GM12878 (cell line): ENCODE measurements at regions of chr1 and their contacts with region 1.

Region 1: DNA sequence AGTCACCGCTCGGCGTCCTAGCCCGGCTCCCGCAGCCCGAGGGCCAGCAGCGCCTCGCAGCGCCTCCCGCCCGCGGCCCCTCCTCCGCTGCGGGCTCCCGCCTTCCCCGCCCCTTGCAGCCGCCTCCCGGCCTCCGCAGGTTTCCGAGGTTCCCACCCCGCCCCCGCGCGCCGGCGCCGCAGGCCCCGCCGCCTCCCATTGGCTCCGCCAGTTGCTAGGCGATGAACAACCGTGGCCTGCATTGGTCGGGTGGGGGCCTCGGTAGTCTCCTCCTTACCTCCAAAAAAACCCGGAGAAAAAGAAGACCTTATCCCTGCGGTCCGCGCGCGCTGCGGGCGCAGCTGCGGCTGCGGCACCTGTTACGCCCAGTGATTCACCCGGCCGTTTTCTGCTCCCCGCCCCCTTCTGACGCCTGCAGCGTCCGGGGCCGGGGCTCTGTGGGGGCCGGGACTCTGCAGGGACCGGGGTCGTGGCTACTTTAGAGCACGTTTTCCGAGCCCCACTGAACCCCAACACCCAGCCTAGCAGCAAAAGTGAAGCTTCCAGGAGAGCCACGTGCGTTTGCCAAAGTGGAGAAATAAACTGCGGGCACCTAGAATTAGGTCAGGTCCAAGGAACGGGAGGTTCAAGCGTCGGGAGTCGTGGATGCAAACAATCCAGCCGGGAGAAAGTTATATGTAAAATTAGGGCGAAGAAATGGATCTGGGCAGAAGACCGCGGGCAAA is at the start of gene SSX2IP:
- DNase-seq: peak; percentile 65
- ATAC-seq: peak; percentile 93
- H3K4me3 ChIP-seq: peak within 1 kb of the TSS; percentile 98
- H3K27ac ChIP-seq: peak within 1 kb of the TSS; percentile 78
- H3K4me1 ChIP-seq: peaks cover 17% of the 10 kb centered on the region; the same call in 1 of the 2 replicates
- H3K27me3 ChIP-seq: no peaks in the 10 kb centered on the region
- CTCF ChIP-seq: no peak
- EP300 ChIP-seq: no peak
- POLR2A ChIP-seq: peak; percentile 85
- RAD21 ChIP-seq: no peak
- polyA plus RNA-seq, gene SSX2IP: 3.3 to 3.9 TPM

Region 2: DNA sequence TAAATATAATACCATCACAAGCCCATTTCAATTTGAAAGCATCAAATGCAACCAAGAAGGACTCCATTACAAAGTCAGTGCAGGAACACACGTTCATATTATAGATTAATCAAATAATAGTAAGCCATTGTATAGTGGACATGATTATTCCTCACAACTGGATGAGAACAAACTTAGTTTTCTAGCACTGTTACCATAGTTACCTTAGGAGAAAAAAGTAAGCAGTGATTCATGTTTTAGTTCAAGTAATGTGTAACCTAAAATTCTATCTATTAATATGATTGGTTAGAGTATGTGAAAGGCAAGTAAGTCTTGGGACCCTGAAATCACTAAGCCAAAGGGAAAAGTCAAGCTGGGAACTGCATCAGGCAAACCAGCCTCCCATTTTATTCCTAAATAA is 15.5 kb before region 1 on chr1:
- CTCF ChIA-PET with region 1: interaction called, 8 read pairs
- POLR2A ChIA-PET with region 1: interaction called, 15 read pairs
- RAD21 ChIA-PET with region 1: interaction called, 7 read pairs
- SMC1A ChIA-PET with region 1: interaction called, 18 read pairs
- in situ Hi-C with region 1: no loop called
- intact Hi-C with region 1: no loop called
- DNase-seq: no peak
- ATAC-seq: no peak
- H3K4me3 ChIP-seq: no peak overlapping the region
- H3K27ac ChIP-seq: no peak overlapping the region
- H3K4me1 ChIP-seq: no peaks in the 10 kb centered on the region
- H3K27me3 ChIP-seq: no peaks in the 10 kb centered on the region
- CTCF ChIP-seq: no peak
- EP300 ChIP-seq: no peak
- POLR2A ChIP-seq: no peak
- RAD21 ChIP-seq: no peak

Region 3: DNA sequence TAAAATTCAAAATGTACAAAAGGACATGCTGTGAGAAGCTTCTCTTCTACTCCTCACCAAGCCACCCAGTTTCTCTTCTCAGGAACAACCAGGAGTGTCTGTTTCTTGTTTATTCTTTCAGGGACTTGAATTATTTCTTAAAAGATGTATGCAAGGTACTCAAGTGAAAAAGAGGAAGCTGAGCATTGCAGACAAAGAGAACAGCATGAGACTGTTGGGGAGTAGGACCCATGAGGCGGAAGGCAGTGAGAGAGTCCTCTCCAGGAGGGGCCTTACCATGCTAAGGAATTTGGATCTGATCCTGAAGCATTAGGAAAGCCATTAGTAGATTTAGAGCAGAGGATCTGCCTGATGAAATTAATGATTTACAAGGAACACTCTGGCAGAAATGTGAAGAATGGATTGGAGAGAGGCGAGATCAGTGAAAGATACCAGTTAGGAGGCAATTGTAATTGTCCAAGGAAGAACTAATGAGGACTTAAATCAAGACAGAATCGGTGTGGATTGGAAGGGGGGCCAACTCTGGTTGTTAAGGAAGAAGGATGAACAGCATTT is 14.4 kb after region 1 on chr1:
- CTCF ChIA-PET with region 1: interaction called, 6 read pairs
- POLR2A ChIA-PET with region 1: interaction called, 32 read pairs
- RAD21 ChIA-PET with region 1: interaction called, 7 read pairs
- SMC1A ChIA-PET with region 1: interaction called, 21 read pairs
- in situ Hi-C with region 1: no loop called
- intact Hi-C with region 1: no loop called
- DNase-seq: no peak
- ATAC-seq: peak; percentile 77
- H3K4me3 ChIP-seq: no peak overlapping the region
- H3K27ac ChIP-seq: no peak overlapping the region
- H3K4me1 ChIP-seq: peaks cover 3% of the 10 kb centered on the region; the same call in 1 of the 2 replicates
- H3K27me3 ChIP-seq: no peaks in the 10 kb centered on the region; a peak in 1 of 4 replicates
- CTCF ChIP-seq: no peak
- EP300 ChIP-seq: no peak
- POLR2A ChIP-seq: no peak
- RAD21 ChIP-seq: no peak

Region 4: DNA sequence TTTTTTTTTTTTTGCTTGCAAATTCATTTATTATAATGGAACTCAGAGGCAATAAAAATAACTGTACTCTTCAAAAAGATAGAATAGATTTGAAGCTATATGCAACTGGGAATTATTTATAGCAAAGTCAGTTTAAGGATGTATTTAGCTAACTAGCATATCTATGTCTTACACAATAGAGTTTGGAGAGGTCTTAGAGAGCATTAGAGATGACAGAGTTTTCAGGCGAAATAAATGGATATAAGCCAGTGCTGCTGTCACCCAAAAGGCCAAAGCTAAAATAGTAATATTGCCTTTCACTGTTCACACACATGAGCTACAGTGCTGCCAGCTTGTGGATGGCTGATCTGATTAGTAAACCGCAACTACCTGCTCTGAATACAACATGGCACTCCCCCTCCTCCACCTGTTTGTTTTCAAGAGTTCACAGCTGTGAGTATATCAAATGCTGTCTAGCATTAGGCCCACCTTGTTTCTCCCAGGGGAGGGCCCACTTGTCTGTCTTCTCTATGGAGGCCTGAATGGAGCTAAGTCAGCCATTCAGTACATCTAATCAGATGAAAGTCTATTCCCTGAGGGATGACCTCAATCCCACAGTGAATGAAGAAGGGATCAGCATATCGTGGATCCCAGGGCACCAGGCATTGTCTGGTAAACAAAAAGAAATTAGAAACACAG is 24.9 kb after region 1 on chr1:
- CTCF ChIA-PET with region 1: interaction called, 52 read pairs
- POLR2A ChIA-PET with region 1: interaction called, 6 read pairs
- RAD21 ChIA-PET with region 1: interaction called, 15 read pairs
- SMC1A ChIA-PET with region 1: interaction called, 113 read pairs
- in situ Hi-C with region 1: no loop called
- intact Hi-C with region 1: no loop called
- DNase-seq: no peak
- ATAC-seq: peak; percentile 25
- H3K4me3 ChIP-seq: no peak overlapping the region
- H3K27ac ChIP-seq: no peak overlapping the region
- H3K4me1 ChIP-seq: no peaks in the 10 kb centered on the region
- H3K27me3 ChIP-seq: no peaks in the 10 kb centered on the region
- CTCF ChIP-seq: no peak
- EP300 ChIP-seq: no peak
- POLR2A ChIP-seq: no peak
- RAD21 ChIP-seq: no peak

Region 5: DNA sequence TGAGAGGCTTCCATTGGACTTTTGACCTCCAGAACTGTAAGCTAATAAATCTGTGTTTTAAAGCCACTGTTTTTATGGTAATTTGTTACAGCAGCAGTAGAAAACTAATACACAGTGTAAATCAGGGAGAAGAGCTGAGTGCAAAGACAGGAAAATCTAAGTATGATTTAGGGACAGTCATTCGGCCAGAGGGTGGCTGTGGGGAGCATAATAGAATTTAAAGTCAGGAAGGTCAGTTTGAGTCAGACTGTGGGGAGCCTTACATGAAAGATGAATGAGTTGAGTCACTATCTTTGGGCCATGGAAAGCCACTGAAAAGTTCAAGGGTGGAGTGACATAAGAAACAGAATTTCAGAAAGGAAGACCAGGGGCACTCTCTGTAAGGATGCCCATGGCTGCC is 52.1 kb after region 1 on chr1:
- CTCF ChIA-PET with region 1: interaction called, 4 read pairs
- POLR2A ChIA-PET with region 1: no interaction called
- RAD21 ChIA-PET with region 1: interaction called, 3 read pairs
- SMC1A ChIA-PET with region 1: interaction called, 13 read pairs
- in situ Hi-C with region 1: no loop called
- intact Hi-C with region 1: no loop called
- DNase-seq: no peak
- ATAC-seq: peak; percentile 86
- H3K4me3 ChIP-seq: no peak overlapping the region
- H3K27ac ChIP-seq: no peak overlapping the region
- H3K4me1 ChIP-seq: no peaks in the 10 kb centered on the region
- H3K27me3 ChIP-seq: no peaks in the 10 kb centered on the region; a peak in 2 of 4 replicates
- CTCF ChIP-seq: no peak
- EP300 ChIP-seq: no peak
- POLR2A ChIP-seq: no peak
- RAD21 ChIP-seq: no peak